ENCODE measurements at regions of chr4 and their contacts with region 1.

Region 1: DNA sequence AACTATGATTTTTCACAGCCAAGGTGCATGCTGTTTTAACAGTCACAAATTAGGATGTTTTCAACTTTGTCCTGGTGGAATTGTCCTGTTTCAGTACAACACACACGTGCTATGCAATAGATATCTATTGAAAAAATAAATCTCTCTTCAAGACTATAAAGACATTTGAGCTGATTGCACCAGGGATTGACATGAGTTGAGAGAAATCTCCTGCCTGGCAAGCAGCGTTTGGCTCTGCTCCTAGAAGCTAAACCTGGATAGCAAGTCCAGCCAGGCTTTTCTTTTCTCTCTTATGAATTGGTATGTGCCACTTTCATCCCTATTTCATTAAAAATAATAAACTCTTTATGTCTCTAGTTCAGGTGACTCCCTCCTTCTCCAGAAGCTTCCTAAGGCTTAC is 16.6 kb upstream of the NPNT start:
- DNase-seq: no peak
- H3K4me3 ChIP-seq: no peak overlapping the region
- H3K27ac ChIP-seq: no peak overlapping the region
- H3K4me1 ChIP-seq: no peaks in the 10 kb centered on the region
- H3K27me3 ChIP-seq: no peaks in the 10 kb centered on the region
- CTCF ChIP-seq: no peak

Region 2: GRCh38 chr4:105843941-105844340 is 34.7 kb before region 1 on chr4:
- CTCF ChIA-PET with region 1: no interaction called
- POLR2A ChIA-PET with region 1: no interaction called
- intact Hi-C with region 1: no loop called
- DNase-seq: no peak
- H3K4me3 ChIP-seq: no peak overlapping the region
- H3K27ac ChIP-seq: no peak overlapping the region
- H3K4me1 ChIP-seq: no peaks in the 10 kb centered on the region
- H3K27me3 ChIP-seq: no peaks in the 10 kb centered on the region
- CTCF ChIP-seq: no peak

Region 3: GRCh38 chr4:106201373-106201772 is 322.7 kb after region 1 on chr4:
- CTCF ChIA-PET with region 1: no interaction called
- POLR2A ChIA-PET with region 1: no interaction called
- intact Hi-C with region 1: loop called (anchors 10 kb)
- DNase-seq: no peak
- H3K4me3 ChIP-seq: no peak overlapping the region
- H3K27ac ChIP-seq: no peak overlapping the region
- H3K4me1 ChIP-seq: no peaks in the 10 kb centered on the region
- H3K27me3 ChIP-seq: no peaks in the 10 kb centered on the region
- CTCF ChIP-seq: peak; percentile 52

Measured in PC-9 (cell line).